RWPE1 (cell line): ENCODE measurements at regions of chr1 and their contacts with region 1.

Region 1: GRCh38 chr1:203440771-203441170 is 34.8 kb upstream of the PRELP start:
- DNase-seq: peak; percentile 43
- H3K27ac ChIP-seq: no peak overlapping the region
- CTCF ChIP-seq: peak; percentile 28

Region 2: DNA sequence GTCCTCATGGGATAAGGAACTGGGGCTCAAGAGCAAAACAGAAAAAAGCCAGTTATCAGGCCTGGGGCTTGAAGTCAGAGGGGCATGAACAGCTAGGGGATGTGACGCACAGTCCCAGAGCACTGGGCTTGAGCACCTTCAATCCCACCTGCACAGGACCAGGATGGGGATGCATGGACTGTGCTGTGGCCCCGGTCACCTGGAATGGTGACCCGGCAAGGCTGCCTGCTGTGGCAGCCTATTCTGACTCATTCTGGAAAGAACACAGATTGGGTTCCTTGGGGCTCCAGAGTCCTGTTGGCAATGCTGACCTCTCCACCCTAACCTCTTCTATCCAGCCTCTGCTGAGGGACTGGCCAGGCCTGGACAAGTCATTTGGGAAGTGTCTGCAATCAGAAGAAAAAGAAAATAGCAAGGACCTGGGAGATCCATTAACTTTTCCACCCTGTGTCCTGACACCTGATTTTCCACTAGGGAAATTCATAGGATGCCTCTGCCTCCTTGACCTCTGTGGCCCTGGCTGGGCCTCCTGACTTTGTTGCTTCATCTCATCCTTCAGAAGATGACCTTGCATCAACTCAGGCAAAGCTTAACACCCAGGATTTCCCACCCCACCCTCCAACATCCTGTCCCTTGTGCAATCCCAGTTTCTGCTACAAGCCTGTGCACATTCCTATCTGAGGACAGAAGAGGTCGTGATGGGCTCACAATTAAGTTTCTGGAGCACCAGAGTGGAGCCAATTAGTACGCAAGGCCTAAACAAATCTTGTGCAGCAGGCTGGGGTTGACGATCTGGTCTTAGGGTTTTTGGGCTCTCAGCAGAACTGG is 71.9 kb before region 1 on chr1:
- CTCF ChIA-PET with region 1: interaction called, 13 read pairs
- POLR2A ChIA-PET with region 1: no interaction called
- DNase-seq: peak; percentile 81
- H3K27ac ChIP-seq: peak overlapping the region; percentile 58
- CTCF ChIP-seq: peak; percentile 62